Activated T-helper 1 cell treated with anti-CD3 and anti-CD28 coated beads, Interleukin-12 subunit alpha, Interleukin-12 subunit beta, Interleukin-2, Interleukin-4 antibody, amounts not matched to agents 30 ng/mL and 10 ng/mL and 1 ng/mL, durations not matched to agents 14 hours and 24 hours and 36 hours (primary cell): ENCODE measurements at regions of chr3 and their contacts with region 1.

Region 1: GRCh38 chr3:15268033-15268631 is 62.1 kb downstream of the CAPN7 start:
- DNase-seq: peak; percentile 74
- H3K4me3 Mint-ChIP-seq: no peak overlapping the region
- H3K27ac Mint-ChIP-seq: no peak overlapping the region
- H3K4me1 Mint-ChIP-seq: peaks cover 73% of the 10 kb centered on the region
- H3K27me3 Mint-ChIP-seq: no peaks in the 10 kb centered on the region

Region 2: DNA sequence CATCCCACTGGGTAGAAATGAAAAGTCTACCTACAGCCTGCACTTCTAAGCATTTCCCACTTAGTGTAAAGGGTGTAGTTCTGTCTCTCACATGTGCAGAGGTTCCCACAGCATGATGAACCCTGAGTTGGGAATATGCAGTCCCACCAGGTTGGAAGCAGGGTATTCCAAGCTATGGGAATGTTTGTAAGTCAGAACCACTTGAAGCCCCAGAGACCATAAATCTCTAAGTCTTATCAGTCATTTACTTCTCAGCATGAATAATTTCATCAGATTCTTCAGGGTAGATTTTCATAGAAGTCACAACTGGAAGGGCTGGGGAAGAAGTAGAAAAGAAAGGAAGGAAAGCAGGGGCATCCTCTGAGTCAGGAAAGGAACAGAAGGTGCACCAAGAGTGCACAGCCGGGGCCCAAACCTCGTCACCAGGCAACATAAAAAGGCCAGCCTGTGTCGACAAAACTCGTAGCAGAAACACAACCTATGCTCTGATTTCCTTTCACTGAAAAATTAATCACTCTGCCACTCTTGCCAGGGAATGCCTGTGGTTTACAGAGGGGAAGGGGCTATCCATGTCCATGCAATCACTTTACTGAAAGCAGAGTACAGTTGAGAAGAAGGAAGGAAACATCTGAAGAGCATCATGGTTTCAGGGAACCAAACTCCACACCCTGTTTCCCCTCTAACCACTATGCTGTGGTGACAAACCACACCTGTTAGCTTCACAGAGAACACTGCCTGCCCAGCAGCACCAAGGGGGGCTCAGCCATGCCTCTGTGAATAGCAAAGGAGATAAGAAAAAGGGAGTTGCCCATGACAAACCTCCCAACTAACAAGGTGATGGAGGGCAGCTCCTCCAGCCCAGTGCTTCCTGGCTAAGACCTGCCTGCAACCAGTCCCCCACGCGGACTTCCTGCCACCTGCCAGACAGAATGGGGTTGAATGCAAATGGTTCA is 23.7 kb after region 1 on chr3:
- intact Hi-C with region 1: loop called (anchors 1 kb)
- DNase-seq: peak; percentile 74
- H3K4me3 Mint-ChIP-seq: peak overlapping the region; percentile 63
- H3K27ac Mint-ChIP-seq: peak overlapping the region; percentile 78
- H3K4me1 Mint-ChIP-seq: peaks cover 89% of the 10 kb centered on the region
- H3K27me3 Mint-ChIP-seq: no peaks in the 10 kb centered on the region

Region 3: GRCh38 chr3:15332405-15333098 is 64.4 kb after region 1 on chr3 and contains the start of gene SH3BP5:
- intact Hi-C with region 1: loop called (anchors 1 kb)
- DNase-seq: peak; percentile 73
- H3K4me3 Mint-ChIP-seq: peak within 1 kb of the TSS; percentile 94
- H3K27ac Mint-ChIP-seq: peak within 1 kb of the TSS; percentile 89
- H3K4me1 Mint-ChIP-seq: peaks cover 72% of the 10 kb centered on the region
- H3K27me3 Mint-ChIP-seq: no peaks in the 10 kb centered on the region
- total RNA-seq, gene SH3BP5: 28.0 and 30.3 TPM in 2 replicates

Region 4: GRCh38 chr3:15345608-15346137 is 77.5 kb after region 1 on chr3:
- intact Hi-C with region 1: no loop called
- DNase-seq: no peak
- H3K4me3 Mint-ChIP-seq: no peak overlapping the region
- H3K27ac Mint-ChIP-seq: no peak overlapping the region
- H3K4me1 Mint-ChIP-seq: peaks cover 40% of the 10 kb centered on the region
- H3K27me3 Mint-ChIP-seq: peaks cover 4% of the 10 kb centered on the region

Region 5: GRCh38 chr3:15427182-15427880 is 159.2 kb after region 1 on chr3 and contains the starts of genes EAF1 and METTL6:
- intact Hi-C with region 1: loop called (anchors 1 kb)
- DNase-seq: peak; percentile 81
- H3K4me3 Mint-ChIP-seq: peak within 1 kb of the TSS; percentile 97
- H3K27ac Mint-ChIP-seq: peak within 1 kb of the TSS; percentile 96
- H3K4me1 Mint-ChIP-seq: peaks cover 61% of the 10 kb centered on the region
- H3K27me3 Mint-ChIP-seq: no peaks in the 10 kb centered on the region
- total RNA-seq, gene EAF1: 27.3 and 27.8 TPM in 2 replicates
- total RNA-seq, gene METTL6: 15.0 and 15.8 TPM in 2 replicates

Region 6: GRCh38 chr3:15557511-15557946 is 289.4 kb after region 1 on chr3:
- intact Hi-C with region 1: loop called (anchors 1 kb)
- DNase-seq: peak; percentile 60
- H3K4me3 Mint-ChIP-seq: no peak overlapping the region
- H3K27ac Mint-ChIP-seq: no peak overlapping the region
- H3K4me1 Mint-ChIP-seq: peaks cover 32% of the 10 kb centered on the region
- H3K27me3 Mint-ChIP-seq: no peaks in the 10 kb centered on the region

Region 7: DNA sequence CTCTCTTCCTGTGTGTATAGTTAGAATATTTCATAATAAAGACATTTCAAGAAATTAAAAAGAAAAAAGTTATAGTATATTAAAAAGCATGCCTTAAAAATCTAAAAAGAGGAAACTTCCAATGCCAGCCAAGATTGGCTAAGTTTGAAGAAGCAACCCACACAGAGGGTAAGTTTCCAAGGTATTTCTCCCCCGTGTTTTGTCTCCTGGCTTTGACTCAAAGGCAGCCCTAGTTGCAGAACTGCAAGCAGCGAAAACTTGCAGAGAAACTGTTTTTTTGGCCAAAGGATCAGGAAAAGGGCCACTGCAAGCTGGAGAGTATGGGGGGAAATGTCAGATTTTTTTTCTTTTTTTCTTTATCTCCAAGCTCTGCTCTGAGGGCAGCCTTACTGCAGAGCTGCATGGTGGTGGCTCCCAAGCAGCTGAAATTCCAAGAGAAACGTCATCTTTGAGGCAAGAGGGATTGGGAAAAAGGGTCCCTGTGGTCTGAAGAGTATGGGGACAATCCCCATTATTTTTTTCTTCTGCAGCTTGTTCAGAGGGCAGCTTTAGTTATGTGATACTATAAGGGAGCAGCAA is 310.2 kb after region 1 on chr3:
- intact Hi-C with region 1: no loop called
- DNase-seq: no peak
- H3K4me3 Mint-ChIP-seq: no peak overlapping the region
- H3K27ac Mint-ChIP-seq: no peak overlapping the region
- H3K4me1 Mint-ChIP-seq: no peaks in the 10 kb centered on the region
- H3K27me3 Mint-ChIP-seq: no peaks in the 10 kb centered on the region